ENCODE measurements at regions of chr11 and their contacts with region 1.

Region 1: GRCh38 chr11:82080160-82080559 is 653.5 kb downstream of the FAM181B start:
- H3K4me3 Mint-ChIP-seq: no peak overlapping the region
- H3K27ac Mint-ChIP-seq: no peak overlapping the region
- H3K4me1 Mint-ChIP-seq: no peaks in the 10 kb centered on the region
- H3K27me3 Mint-ChIP-seq: no peaks in the 10 kb centered on the region

Region 2: DNA sequence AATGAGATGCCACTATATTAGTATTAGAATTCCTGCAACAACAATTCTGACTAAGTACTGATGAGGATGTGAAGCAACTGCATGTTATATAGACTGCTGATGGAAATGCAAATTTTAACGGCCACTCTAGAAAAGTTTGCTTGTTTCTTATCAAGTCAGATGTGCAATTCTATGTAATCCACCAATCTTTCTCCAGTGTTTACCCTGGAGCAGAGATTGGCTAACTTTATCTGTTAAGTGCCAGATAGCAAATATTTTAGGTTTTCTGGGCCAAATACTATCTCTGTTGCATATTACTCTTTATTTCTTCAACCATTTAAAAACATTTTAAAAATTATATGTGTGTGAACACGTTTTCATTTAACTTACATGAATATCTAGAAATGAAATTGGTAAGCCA is 66.6 kb after region 1 on chr11:
- intact Hi-C with region 1: loop called (anchors 10 kb)
- H3K4me3 Mint-ChIP-seq: no peak overlapping the region
- H3K27ac Mint-ChIP-seq: no peak overlapping the region
- H3K4me1 Mint-ChIP-seq: no peaks in the 10 kb centered on the region
- H3K27me3 Mint-ChIP-seq: no peaks in the 10 kb centered on the region